ENCODE measurements at regions of chr1 and their contacts with region 1.

Region 1: DNA sequence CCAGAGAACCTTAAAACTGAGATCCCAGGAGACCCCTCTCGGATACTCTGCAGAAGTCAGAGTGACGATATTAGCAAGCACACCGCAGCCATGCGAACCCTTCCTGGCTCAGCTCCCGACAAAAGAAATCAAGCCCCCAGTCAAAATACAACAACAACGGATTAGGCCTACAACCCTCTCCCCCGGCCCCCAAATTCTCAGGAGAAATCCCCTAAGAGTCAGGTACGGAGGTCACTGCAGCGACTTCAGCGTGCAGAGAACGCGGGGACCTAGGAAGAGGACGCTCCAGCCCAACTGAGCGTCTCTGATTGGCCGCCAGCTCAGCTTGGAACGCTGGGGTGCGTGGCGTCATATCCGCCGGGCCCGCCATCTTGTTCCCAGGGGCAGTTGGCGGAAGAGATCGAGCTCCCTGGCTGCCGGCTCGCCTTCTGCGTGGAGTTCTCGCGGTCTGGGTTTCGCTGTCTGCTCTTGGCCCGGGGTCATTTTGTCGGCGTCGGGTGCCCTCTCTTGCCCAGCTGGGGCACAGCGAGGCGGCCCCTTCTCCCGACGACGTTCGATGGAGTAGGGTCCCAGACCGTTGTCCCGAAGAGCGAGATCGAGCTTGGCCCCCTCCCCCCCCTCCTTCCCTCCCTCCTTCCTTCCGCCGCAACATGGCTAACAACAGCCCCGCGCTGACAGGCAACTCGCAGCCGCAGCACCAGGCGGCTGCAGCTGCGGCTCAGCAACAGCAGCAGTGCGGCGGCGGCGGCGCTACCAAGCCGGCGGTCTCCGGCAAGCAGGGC is at the start of gene PRPF38B:
- DNase-seq: peak; percentile 95
- ATAC-seq: peak; percentile 98 to 99 (median 99)
- H3K4me3 ChIP-seq: peak within 1 kb of the TSS; percentile 60 to 87 (median 82)
- H3K27ac ChIP-seq: peak within 1 kb of the TSS; percentile 91 to 99 (median 96)
- H3K4me1 ChIP-seq: peaks cover 0 to 48% (median 33%) of the 10 kb centered on the region in 9 donors
- H3K27me3 ChIP-seq: no peaks in the 10 kb centered on the region
- CTCF ChIP-seq: no peak
- total RNA-seq, gene PRPF38B: 11.2 to 22.8 (median 13.3) TPM

Region 2: GRCh38 chr1:108643492-108644335 is 48.4 kb before region 1 on chr1:
- intact Hi-C with region 1: loop called in 1 of 10 experiments (anchors 10 kb)
- DNase-seq: peak in 1 of 2 donors; percentile 56
- ATAC-seq: peak in 7 of 8 donors; percentile 50 to 80 (median 68)
- H3K4me3 ChIP-seq: no peak overlapping the region
- H3K27ac ChIP-seq: peak overlapping the region in 1 of 10 donors; percentile 90
- H3K4me1 ChIP-seq: peaks cover 0 to 41% (median 0%) of the 10 kb centered on the region in 9 donors
- H3K27me3 ChIP-seq: no peaks in the 10 kb centered on the region
- CTCF ChIP-seq: peak; percentile 30 to 83 (median 70)

Region 3: GRCh38 chr1:108670131-108670773 is 21.9 kb before region 1 on chr1:
- intact Hi-C with region 1: no loop called
- DNase-seq: no peak
- ATAC-seq: peak in 1 of 8 donors; percentile 62
- H3K4me3 ChIP-seq: no peak overlapping the region
- H3K27ac ChIP-seq: no peak overlapping the region
- H3K4me1 ChIP-seq: no peaks in the 10 kb centered on the region
- H3K27me3 ChIP-seq: peaks cover 0 to 5% (median 0%) of the 10 kb centered on the region in 7 donors
- CTCF ChIP-seq: no peak

Region 4: GRCh38 chr1:108746372-108747205 is 54.5 kb after region 1 on chr1 and contains the start of gene STXBP3:
- intact Hi-C with region 1: loop called in 7 of 10 experiments (anchors 1 to 10 kb)
- DNase-seq: peak; percentile 98 to 100
- ATAC-seq: peak; percentile 96 to 99 (median 98)
- H3K4me3 ChIP-seq: peak within 1 kb of the TSS; percentile 58 to 94 (median 82)
- H3K27ac ChIP-seq: peak within 1 kb of the TSS; percentile 86 to 99 (median 96)
- H3K4me1 ChIP-seq: peaks cover 0 to 25% (median 15%) of the 10 kb centered on the region in 9 donors
- H3K27me3 ChIP-seq: no peaks in the 10 kb centered on the region
- CTCF ChIP-seq: peak; percentile 85 to 99 (median 96)
- total RNA-seq, gene STXBP3: 18.1 to 34.4 (median 22.9) TPM

Region 5: GRCh38 chr1:108767115-108767514 is 75.0 kb after region 1 on chr1:
- intact Hi-C with region 1: no loop called
- DNase-seq: no peak
- ATAC-seq: peak in 3 of 8 donors; percentile 59 to 75 (median 65)
- H3K4me3 ChIP-seq: no peak overlapping the region
- H3K27ac ChIP-seq: peak overlapping the region in 1 of 10 donors; percentile 7
- H3K4me1 ChIP-seq: peaks cover 0 to 15% (median 11%) of the 10 kb centered on the region in 9 donors
- H3K27me3 ChIP-seq: no peaks in the 10 kb centered on the region
- CTCF ChIP-seq: no peak

Region 6: GRCh38 chr1:108816049-108816893 is 124.1 kb after region 1 on chr1:
- intact Hi-C with region 1: loop called in 1 of 10 experiments (anchors 10 kb)
- DNase-seq: peak; percentile 52 to 82
- ATAC-seq: peak; percentile 82 to 95 (median 90)
- H3K4me3 ChIP-seq: peak overlapping the region in 9 of 10 donors; percentile 15 to 51 (median 33)
- H3K27ac ChIP-seq: peak overlapping the region; percentile 28 to 86 (median 78)
- H3K4me1 ChIP-seq: peaks cover 0 to 30% (median 14%) of the 10 kb centered on the region in 9 donors
- H3K27me3 ChIP-seq: no peaks in the 10 kb centered on the region
- CTCF ChIP-seq: no peak